B cell (primary cell): ENCODE measurements at regions of chr17 and their contacts with region 1.

Region 1: GRCh38 chr17:21098934-21099689 is 27.7 kb upstream of the DHRS7B start:
- DNase-seq: peak; percentile 84
- ATAC-seq: peak; percentile 94
- H3K4me3 ChIP-seq: peak overlapping the region; percentile 60 to 82 (median 68)
- H3K4me3 Mint-ChIP-seq: peak overlapping the region; percentile 96
- H3K27ac ChIP-seq: no peak overlapping the region
- H3K27ac Mint-ChIP-seq: peak overlapping the region; percentile 46
- H3K4me1 ChIP-seq: peaks cover 4 to 19% of the 10 kb centered on the region in 2 donors
- H3K4me1 Mint-ChIP-seq: peaks cover 15% of the 10 kb centered on the region
- H3K27me3 ChIP-seq: no peaks in the 10 kb centered on the region
- H3K27me3 Mint-ChIP-seq: no peaks in the 10 kb centered on the region
- CTCF ChIP-seq: no peak

Region 2: GRCh38 chr17:21019976-21020586 is 79.0 kb before region 1 on chr17:
- CTCF ChIA-PET with region 1: interaction called, 22 read pairs
- POLR2A ChIA-PET with region 1: no interaction called
- intact Hi-C with region 1: loop called (anchors 1 kb)
- DNase-seq: peak; percentile 61
- ATAC-seq: peak; percentile 84
- H3K4me3 ChIP-seq: no peak overlapping the region
- H3K4me3 Mint-ChIP-seq: peak overlapping the region; percentile 60
- H3K27ac ChIP-seq: peak overlapping the region; percentile 5 to 29
- H3K27ac Mint-ChIP-seq: peak overlapping the region; percentile 82
- H3K4me1 ChIP-seq: peaks cover 10 to 28% of the 10 kb centered on the region in 2 donors
- H3K4me1 Mint-ChIP-seq: peaks cover 37% of the 10 kb centered on the region
- H3K27me3 ChIP-seq: no peaks in the 10 kb centered on the region
- H3K27me3 Mint-ChIP-seq: no peaks in the 10 kb centered on the region
- CTCF ChIP-seq: peak; percentile 48

Region 3: DNA sequence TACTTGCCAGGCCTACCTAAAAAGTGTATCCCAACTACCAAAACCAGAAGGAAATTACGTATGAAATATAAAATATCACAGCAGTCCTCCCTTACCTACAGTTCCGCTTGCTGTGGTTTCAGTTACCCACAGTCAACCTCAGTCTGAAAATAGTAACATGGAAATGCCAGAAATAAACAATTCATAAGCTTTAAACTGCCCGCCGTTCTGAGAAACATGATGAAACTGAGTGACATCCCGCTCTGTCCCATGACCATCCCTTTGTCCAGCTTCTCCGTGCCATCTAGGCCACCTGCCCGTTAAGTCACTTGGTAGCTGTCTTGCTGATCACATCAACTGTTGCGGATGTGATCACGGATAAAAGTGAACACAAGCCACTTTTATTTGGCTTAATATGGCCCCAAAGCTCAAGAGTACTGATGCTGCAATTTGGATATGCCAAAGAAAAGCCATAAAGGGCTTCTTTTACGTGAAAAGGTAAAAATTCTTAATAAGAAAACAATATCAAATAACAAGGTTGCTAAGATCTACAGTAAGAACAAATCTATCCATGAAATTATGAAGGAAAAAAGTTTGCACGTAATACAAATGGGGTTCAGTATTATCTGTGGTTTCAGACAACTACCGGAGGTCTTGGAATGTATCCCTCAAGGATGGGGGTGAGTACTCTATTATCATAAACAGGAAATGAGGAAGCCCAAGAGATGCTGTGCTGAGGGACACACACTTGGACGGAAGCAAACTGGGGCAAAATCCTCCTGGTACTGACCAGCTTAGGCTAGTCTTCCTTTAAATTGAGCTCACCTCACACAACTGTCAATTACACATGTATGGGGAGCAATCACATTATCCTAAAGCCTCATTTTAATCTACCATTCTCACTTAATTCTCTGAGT is 64.5 kb before region 1 on chr17:
- CTCF ChIA-PET with region 1: interaction called, 20 read pairs
- POLR2A ChIA-PET with region 1: interaction called, 4 read pairs
- intact Hi-C with region 1: no loop called
- DNase-seq: peak; percentile 78
- ATAC-seq: peak; percentile 76
- H3K4me3 ChIP-seq: peak overlapping the region; percentile 28 to 64 (median 45)
- H3K4me3 Mint-ChIP-seq: peak overlapping the region; percentile 72
- H3K27ac ChIP-seq: peak overlapping the region; percentile 89 to 96
- H3K27ac Mint-ChIP-seq: peak overlapping the region; percentile 83
- H3K4me1 ChIP-seq: peaks cover 73 to 82% of the 10 kb centered on the region in 2 donors
- H3K4me1 Mint-ChIP-seq: peaks cover 81% of the 10 kb centered on the region
- H3K27me3 ChIP-seq: no peaks in the 10 kb centered on the region
- H3K27me3 Mint-ChIP-seq: no peaks in the 10 kb centered on the region
- CTCF ChIP-seq: no peak

Region 4: DNA sequence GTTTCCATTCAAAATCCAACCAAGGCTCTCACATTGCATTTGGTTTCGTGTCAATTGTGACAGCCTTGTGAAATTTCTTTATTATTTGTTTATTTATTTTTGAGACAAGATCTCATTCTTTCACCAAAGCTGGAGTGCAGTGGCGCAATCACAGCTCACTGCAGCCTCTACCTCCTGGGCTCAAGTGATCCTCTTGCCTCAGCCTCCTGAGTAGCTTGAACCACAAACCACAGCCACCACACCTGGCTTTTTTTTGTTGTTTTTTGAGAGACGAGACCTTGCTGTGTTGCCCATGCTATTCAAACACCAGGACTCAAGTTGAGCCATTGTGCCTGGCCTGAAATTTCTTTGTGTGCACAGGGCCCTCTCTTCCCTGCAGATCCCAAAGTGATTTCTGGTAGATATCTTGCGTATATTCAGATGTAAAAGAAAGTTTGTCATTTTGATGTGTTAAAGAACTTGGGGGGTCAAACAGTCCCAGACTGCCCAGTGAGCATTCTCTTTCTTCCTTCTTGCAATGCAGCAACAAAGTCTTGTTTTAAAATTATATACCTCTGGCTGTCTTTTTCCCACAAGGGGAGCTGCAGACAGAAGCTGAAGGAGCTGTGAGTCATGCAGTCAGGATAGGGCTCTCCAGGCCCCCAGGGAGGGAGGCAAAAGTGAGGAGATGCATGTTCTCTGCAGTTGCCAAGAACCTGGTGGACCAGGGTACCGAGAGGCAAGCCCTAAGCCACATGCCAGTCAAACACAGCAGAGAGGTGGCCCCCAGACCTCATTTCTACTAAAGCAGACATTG is 40.8 kb before region 1 on chr17:
- CTCF ChIA-PET with region 1: interaction called, 7 read pairs
- POLR2A ChIA-PET with region 1: no interaction called
- intact Hi-C with region 1: loop called (anchors 1 kb)
- DNase-seq: no peak
- ATAC-seq: no peak
- H3K4me3 ChIP-seq: no peak overlapping the region
- H3K4me3 Mint-ChIP-seq: no peak overlapping the region
- H3K27ac ChIP-seq: no peak overlapping the region
- H3K27ac Mint-ChIP-seq: no peak overlapping the region
- H3K4me1 ChIP-seq: peaks cover 14 to 23% of the 10 kb centered on the region in 2 donors
- H3K4me1 Mint-ChIP-seq: peaks cover 24% of the 10 kb centered on the region
- H3K27me3 ChIP-seq: no peaks in the 10 kb centered on the region
- H3K27me3 Mint-ChIP-seq: no peaks in the 10 kb centered on the region
- CTCF ChIP-seq: no peak